ENCODE measurements at regions of chr17 and their contacts with region 1.

Region 1: DNA sequence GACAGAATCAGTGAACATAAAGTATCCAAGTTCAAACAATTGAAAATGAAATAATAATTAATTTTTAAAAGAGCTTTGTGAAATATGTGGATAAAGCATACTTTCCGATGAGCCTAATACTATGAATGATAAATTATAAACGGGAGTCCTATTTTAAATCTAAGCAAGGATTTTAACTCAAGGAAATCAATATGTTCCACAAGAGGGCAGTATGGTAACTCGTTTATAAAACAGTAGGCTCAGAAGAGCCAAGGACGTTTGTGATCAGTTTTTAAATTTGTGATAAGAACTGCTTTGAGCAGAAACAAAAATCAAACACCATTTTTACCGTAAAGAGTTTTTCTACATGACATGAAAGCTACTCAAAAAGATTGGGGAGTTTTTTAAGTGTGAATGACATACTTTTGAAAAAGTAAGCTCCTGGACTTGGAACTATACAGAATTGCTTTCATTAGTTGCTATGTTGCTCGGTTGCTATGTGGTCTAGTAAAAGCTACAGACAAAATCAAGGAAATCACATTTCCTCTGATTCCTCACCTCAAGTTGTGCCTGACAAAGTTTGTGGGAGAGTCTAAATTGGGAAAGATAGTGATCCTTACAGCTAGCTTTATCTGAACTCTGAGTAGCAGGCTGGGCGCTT is 11.8 kb upstream of the TEKT1 start:
- DNase-seq: no peak
- ATAC-seq: no peak
- H3K4me3 Mint-ChIP-seq: no peak overlapping the region
- H3K27ac Mint-ChIP-seq: no peak overlapping the region
- H3K4me1 Mint-ChIP-seq: no peaks in the 10 kb centered on the region
- H3K27me3 Mint-ChIP-seq: peaks cover 32% of the 10 kb centered on the region
- CTCF ChIP-seq: no peak

Region 2: DNA sequence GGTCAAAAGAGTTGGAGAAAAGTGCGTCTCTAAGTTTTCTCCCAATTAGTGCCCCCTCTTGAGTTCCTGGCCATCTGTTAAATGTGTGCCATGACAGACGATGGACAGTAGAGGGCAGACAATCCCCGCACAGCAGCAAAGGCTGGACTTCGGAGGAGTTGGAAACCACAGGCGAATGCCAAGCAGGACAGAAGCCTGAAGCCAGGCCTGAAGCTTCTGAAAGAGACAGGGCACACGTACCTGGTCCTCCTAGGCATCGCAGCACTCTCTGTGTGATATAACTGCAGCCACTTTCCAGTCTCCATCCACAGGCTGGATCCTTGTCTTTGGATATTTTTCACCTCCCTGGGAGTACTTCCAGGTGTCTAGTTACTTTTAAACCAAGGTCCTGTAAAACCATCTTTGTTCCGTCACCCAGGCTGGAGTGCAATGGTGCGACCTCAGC is 177.3 kb before region 1 on chr17:
- CTCF ChIA-PET with region 1: interaction called, 22 read pairs
- POLR2A ChIA-PET with region 1: no interaction called
- DNase-seq: peak; percentile 78
- ATAC-seq: peak; percentile 95
- H3K4me3 Mint-ChIP-seq: no peak overlapping the region
- H3K27ac Mint-ChIP-seq: no peak overlapping the region
- H3K4me1 Mint-ChIP-seq: peaks cover 12% of the 10 kb centered on the region
- H3K27me3 Mint-ChIP-seq: peaks cover 41% of the 10 kb centered on the region
- CTCF ChIP-seq: peak; percentile 68

Region 3: DNA sequence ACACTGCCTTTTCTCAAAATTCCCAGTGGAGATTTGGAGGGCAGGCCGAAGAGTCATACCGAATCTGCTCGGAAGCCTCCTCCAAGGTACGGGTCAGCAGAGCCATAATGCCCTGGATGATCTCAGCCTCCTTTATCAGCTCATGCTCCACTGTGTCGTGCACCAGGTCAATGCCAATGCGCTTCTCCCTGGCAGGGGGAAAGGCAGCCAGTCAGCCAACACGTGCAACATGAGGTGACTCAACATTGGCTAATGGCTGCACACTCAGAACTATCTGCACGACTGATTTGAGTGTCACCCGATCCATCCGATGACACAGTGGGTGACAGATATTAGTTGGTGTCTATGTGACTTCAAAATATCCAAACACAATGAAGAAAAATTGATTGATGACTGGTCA is 27.6 kb before region 1 on chr17:
- CTCF ChIA-PET with region 1: no interaction called
- POLR2A ChIA-PET with region 1: no interaction called
- DNase-seq: no peak
- ATAC-seq: no peak
- H3K4me3 Mint-ChIP-seq: no peak overlapping the region
- H3K27ac Mint-ChIP-seq: no peak overlapping the region
- H3K4me1 Mint-ChIP-seq: no peaks in the 10 kb centered on the region
- H3K27me3 Mint-ChIP-seq: peaks cover 20% of the 10 kb centered on the region
- CTCF ChIP-seq: no peak

Region 4: GRCh38 chr17:6853764-6854442 is 10.5 kb after region 1 on chr17:
- CTCF ChIA-PET with region 1: interaction called, 25 read pairs
- POLR2A ChIA-PET with region 1: no interaction called
- DNase-seq: peak; percentile 64
- ATAC-seq: peak; percentile 97
- H3K4me3 Mint-ChIP-seq: peak overlapping the region; percentile 78
- H3K27ac Mint-ChIP-seq: peak overlapping the region; percentile 66
- H3K4me1 Mint-ChIP-seq: peaks cover 23% of the 10 kb centered on the region
- H3K27me3 Mint-ChIP-seq: peaks cover 14% of the 10 kb centered on the region
- CTCF ChIP-seq: peak; percentile 72

Region 5: DNA sequence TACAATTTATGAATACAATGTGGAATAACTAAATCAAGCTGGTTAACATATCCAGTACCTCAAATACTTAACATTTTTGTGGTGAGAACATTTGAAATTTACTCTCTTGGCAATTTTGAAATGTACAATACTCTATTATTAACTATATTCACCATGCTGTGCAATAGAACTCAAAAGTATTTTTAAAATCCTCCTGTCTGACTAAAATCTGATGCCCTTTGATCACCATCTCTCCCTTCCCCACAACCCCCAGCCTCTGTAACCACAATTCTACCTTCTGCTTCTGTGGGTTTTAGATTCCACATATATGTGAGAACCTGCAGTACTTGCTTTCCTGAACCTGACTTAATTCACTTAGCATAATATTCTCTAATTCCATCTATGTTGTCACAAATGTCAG is 80.8 kb after region 1 on chr17:
- CTCF ChIA-PET with region 1: no interaction called
- POLR2A ChIA-PET with region 1: no interaction called
- DNase-seq: no peak
- ATAC-seq: no peak
- H3K4me3 Mint-ChIP-seq: no peak overlapping the region
- H3K27ac Mint-ChIP-seq: no peak overlapping the region
- H3K4me1 Mint-ChIP-seq: no peaks in the 10 kb centered on the region
- H3K27me3 Mint-ChIP-seq: peaks cover 31% of the 10 kb centered on the region
- CTCF ChIP-seq: no peak

Region 6: DNA sequence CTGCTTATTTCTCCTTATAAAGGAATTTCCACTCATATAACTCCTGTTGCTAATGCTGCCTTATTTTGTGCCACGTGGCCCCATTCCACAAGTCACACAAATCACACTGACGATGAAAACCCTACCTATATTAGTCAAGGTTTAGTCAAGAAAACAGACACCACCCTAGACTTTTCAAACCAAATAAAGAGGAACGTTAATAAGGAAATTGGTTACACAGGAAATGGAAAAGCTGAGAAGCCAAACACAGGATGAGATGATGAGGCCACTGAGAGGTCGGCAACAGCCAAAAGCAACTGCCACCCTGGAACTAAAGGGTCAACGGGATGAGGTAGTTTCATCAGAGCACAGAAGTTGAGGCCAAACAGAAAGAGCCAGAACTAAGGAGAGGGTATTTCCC is 105.2 kb after region 1 on chr17:
- CTCF ChIA-PET with region 1: no interaction called
- POLR2A ChIA-PET with region 1: no interaction called
- DNase-seq: no peak
- ATAC-seq: no peak
- H3K4me3 Mint-ChIP-seq: no peak overlapping the region
- H3K27ac Mint-ChIP-seq: no peak overlapping the region
- H3K4me1 Mint-ChIP-seq: no peaks in the 10 kb centered on the region
- H3K27me3 Mint-ChIP-seq: peaks cover 3% of the 10 kb centered on the region; the same call in 1 of the 2 replicates
- CTCF ChIP-seq: no peak

Region 7: DNA sequence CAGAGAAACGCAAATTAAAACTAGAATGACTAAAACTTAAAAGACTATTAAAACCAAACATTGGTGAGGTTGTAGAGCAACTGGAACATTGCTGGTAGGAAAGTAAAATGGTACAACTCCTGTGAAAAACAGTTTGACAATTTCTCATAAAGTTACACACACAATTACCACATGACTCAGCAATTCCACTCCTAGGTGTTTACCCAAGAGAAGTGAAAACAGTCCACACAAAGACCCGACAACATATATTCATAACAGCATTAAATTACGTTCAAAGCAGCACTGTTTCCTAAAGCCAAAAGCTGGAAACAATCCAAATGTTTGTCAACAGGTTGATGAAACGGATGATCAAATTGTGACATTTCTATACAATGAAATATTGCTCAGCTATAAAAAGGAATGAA is 126.0 kb after region 1 on chr17:
- CTCF ChIA-PET with region 1: no interaction called
- POLR2A ChIA-PET with region 1: no interaction called
- DNase-seq: no peak
- ATAC-seq: no peak
- H3K4me3 Mint-ChIP-seq: no peak overlapping the region
- H3K27ac Mint-ChIP-seq: no peak overlapping the region
- H3K4me1 Mint-ChIP-seq: no peaks in the 10 kb centered on the region
- H3K27me3 Mint-ChIP-seq: peaks cover 15% of the 10 kb centered on the region
- CTCF ChIP-seq: no peak

Region 8: DNA sequence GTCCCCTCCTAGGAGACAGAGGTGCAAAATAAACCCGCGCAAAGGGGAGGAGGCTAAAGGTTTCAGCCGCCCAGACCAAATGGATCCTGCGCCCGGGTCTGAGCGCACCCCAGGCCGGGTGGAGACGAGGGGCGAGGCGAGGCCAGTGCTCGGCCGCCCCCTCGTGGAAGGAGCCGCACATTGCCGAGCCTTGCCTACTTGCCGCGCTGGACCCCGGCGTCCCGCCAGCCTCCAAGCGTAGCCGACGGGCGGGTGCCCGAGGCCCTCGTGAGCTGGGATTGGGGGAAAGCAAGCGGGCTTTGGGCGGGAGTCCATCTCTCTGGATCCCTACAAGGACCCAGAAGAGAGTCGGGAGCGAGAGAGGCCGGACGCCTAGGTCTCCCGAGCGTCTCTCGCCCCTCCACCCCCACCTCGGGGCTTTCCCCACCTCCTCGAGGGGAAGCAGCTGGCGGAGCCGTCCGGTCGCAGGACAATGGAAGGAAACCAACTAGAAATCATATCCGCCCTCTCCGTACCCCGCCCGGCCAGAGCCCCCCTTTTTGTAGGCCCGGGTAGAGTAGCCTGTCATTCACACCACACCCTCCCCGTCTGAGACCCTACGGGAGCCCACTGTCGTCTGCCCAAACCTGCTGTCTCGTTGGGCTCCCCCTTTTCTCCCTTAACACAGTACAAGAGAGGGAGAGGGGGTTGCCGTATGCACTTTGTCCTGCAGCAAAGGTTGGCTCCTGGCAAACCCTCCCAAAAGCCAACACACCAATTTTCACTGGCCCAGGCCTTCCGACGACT is 178.8 kb after region 1 on chr17:
- CTCF ChIA-PET with region 1: interaction called, 15 read pairs
- POLR2A ChIA-PET with region 1: no interaction called
- DNase-seq: peak; percentile 90
- ATAC-seq: peak; percentile 63
- H3K4me3 Mint-ChIP-seq: peak overlapping the region; percentile 91
- H3K27ac Mint-ChIP-seq: peak overlapping the region; percentile 93
- H3K4me1 Mint-ChIP-seq: peaks cover 51% of the 10 kb centered on the region
- H3K27me3 Mint-ChIP-seq: peaks cover 44% of the 10 kb centered on the region
- CTCF ChIP-seq: peak; percentile 88

Measured in WTC11 (cell line).